WTC11 (cell line): ENCODE measurements at regions of chr6 and their contacts with region 1.

Region 1: DNA sequence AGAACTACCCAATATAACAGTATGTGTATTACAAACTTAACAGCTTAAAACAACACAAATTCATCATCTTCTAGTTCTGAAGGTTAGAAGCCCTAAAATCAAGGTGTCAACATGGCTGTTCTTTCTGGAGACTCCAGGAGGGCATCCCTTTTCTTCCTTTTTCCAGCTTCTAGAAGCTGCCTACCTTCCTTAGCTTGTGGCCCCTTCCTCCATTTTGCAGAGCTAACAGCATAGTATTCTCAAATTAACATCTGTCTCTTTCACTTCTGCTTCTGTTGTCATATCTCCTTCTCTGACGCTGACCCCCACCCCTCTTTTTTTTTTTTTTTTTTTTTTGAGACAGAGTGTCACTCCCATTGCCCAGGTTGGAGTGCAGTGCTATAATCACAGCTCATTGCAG is 52.8 kb upstream of the AKIRIN2 start:
- DNase-seq: no peak
- ATAC-seq: no peak
- H3K4me3 Mint-ChIP-seq: no peak overlapping the region
- H3K27ac Mint-ChIP-seq: no peak overlapping the region
- H3K4me1 Mint-ChIP-seq: peaks cover 13% of the 10 kb centered on the region
- H3K27me3 Mint-ChIP-seq: no peaks in the 10 kb centered on the region
- CTCF ChIP-seq: no peak

Region 2: GRCh38 chr6:87723170-87724078 is 31.4 kb before region 1 on chr6:
- CTCF ChIA-PET with region 1: no interaction called
- POLR2A ChIA-PET with region 1: interaction called, 10 read pairs
- DNase-seq: peak; percentile 46
- ATAC-seq: peak; percentile 85
- H3K4me3 Mint-ChIP-seq: no peak overlapping the region
- H3K27ac Mint-ChIP-seq: peak overlapping the region; percentile 64; the same call in 1 of the 2 replicates
- H3K4me1 Mint-ChIP-seq: peaks cover 23% of the 10 kb centered on the region
- H3K27me3 Mint-ChIP-seq: no peaks in the 10 kb centered on the region; the same call in 1 of the 2 replicates
- CTCF ChIP-seq: no peak